ENCODE measurements at regions of chr1 and their contacts with region 1.

Region 1: GRCh38 chr1:241895013-241895412 is 47.0 kb downstream of the EXO1 start:
- DNase-seq: peak; percentile 71
- ATAC-seq: peak; percentile 86
- H3K4me3 ChIP-seq: no peak overlapping the region
- H3K27ac ChIP-seq: no peak overlapping the region
- H3K4me1 ChIP-seq: peaks cover 14% of the 10 kb centered on the region
- H3K27me3 ChIP-seq: no peaks in the 10 kb centered on the region
- CTCF ChIP-seq: no peak

Region 2: DNA sequence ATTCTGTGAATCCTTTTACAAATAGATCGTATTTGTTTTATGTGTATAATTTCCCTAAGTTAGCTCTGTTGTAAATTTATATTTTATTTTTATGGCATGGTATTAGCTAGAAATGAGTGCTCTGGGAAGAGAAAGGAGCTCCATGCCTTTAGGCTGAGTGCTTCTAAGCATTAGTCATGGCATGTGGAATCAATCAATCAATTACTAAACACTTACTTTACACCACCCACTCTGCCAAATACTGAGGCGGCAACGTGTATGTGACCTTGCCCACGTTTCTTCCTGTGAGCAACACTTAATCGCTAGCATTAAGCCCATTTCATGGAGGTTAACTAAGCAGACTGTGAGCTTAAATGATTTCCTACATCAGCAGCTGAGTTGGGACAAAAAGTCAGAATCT is 55.4 kb after region 1 on chr1:
- CTCF ChIA-PET with region 1: no interaction called
- POLR2A ChIA-PET with region 1: no interaction called
- intact Hi-C with region 1: loop called (anchors 1 kb)
- DNase-seq: peak; percentile 71
- ATAC-seq: peak; percentile 54
- H3K4me3 ChIP-seq: no peak overlapping the region
- H3K27ac ChIP-seq: no peak overlapping the region
- H3K4me1 ChIP-seq: peaks cover 8% of the 10 kb centered on the region; the same call in 1 of the 2 replicates
- H3K27me3 ChIP-seq: no peaks in the 10 kb centered on the region
- CTCF ChIP-seq: no peak

Region 3: DNA sequence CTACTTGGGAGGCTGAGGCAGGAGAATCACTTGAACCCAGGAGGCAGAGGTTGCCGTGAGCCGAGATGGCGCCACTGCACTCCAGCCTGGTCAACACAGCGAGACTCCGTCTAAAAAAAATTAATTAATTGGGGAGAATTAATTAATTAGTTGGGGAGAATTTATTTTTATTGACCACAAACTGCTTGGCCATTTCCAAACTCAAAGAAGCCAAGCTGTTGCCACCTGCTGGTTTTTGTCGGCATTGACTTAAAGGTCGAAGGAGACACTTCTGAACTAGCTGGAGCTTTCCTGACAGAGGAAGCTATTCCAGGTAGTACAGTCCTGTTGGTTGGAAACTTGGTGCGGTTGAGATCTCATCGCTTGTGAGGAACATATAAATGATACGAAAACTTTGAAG is 90.8 kb after region 1 on chr1:
- CTCF ChIA-PET with region 1: interaction called, 9 read pairs
- POLR2A ChIA-PET with region 1: no interaction called
- intact Hi-C with region 1: loop called (anchors 1 kb)
- DNase-seq: peak; percentile 79
- ATAC-seq: peak; percentile 62
- H3K4me3 ChIP-seq: no peak overlapping the region
- H3K27ac ChIP-seq: no peak overlapping the region
- H3K4me1 ChIP-seq: peaks cover 27% of the 10 kb centered on the region
- H3K27me3 ChIP-seq: no peaks in the 10 kb centered on the region
- CTCF ChIP-seq: peak; percentile 78

Measured in PC-3 (cell line).